Panc1 (cell line): ENCODE measurements at regions of chrX and their contacts with region 1.

Region 1: GRCh38 chrX:118603981-118604380 is 108.4 kb downstream of the DOCK11 start:
- DNase-seq: peak; percentile 59
- ATAC-seq: peak; percentile 85
- H3K4me3 ChIP-seq: peak overlapping the region in 1 of 2 experiments; percentile 12; a peak in 2 of 4 replicates
- H3K27ac ChIP-seq: no peak overlapping the region
- H3K4me1 ChIP-seq: peaks cover 3% of the 10 kb centered on the region; the same call in 1 of the 2 replicates
- H3K27me3 ChIP-seq: no peaks in the 10 kb centered on the region; the same call in 1 of the 2 replicates
- CTCF ChIP-seq: peak; percentile 88

Region 2: DNA sequence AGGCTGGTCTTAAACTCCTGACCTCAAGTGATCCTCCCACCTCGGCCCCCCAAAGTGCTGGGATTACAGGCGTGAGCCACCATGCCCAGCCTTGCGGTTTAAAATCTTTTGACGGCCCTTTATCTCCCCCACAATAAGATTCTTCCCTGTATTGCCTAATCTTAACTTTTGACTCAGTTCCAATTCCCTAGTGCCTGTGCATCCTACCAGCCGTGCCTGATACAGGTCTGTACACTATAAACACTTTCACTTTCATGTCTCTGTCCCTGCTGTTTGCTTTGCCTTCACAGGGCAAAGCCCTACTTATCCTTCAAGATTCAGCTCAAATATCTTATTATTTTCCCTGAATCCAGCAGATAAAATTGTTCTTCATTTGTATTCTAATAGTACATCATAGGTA is 183.5 kb before region 1 on chrX:
- CTCF ChIA-PET with region 1: no interaction called
- POLR2A ChIA-PET with region 1: interaction called, 12 read pairs
- in situ Hi-C with region 1: no loop called
- intact Hi-C with region 1: no loop called
- DNase-seq: no peak
- ATAC-seq: no peak
- H3K4me3 ChIP-seq: no peak overlapping the region
- H3K27ac ChIP-seq: no peak overlapping the region
- H3K4me1 ChIP-seq: no peaks in the 10 kb centered on the region
- H3K27me3 ChIP-seq: no peaks in the 10 kb centered on the region
- CTCF ChIP-seq: no peak

Region 3: DNA sequence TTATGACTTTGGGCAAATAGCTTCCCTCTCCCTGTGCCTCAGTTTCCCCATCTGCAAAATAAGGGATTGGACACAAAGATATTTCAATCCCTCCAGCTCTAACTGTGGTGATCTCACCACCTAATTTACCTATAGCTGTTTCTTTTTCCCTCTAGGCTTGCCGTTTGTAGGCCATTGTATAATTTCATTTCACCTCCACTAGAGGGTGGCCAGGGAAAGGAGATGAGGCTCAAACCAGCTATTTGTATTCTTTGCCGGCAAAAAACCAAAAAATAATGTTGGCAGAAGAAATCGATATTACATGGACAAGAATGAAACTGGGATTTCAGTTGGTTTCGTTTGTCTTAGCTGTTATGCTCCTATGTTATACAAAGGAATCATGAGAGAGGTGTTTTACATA is 144.5 kb before region 1 on chrX:
- CTCF ChIA-PET with region 1: interaction called, 36 read pairs
- POLR2A ChIA-PET with region 1: interaction called, 6 read pairs
- in situ Hi-C with region 1: no loop called
- intact Hi-C with region 1: loop called (anchors 2 kb)
- DNase-seq: peak; percentile 12
- ATAC-seq: peak; percentile 83
- H3K4me3 ChIP-seq: no peak overlapping the region
- H3K27ac ChIP-seq: no peak overlapping the region
- H3K4me1 ChIP-seq: no peaks in the 10 kb centered on the region
- H3K27me3 ChIP-seq: no peaks in the 10 kb centered on the region
- CTCF ChIP-seq: peak; percentile 73; the same call in 1 of the 2 replicates

Region 4: GRCh38 chrX:118627084-118627758 is 23.2 kb after region 1 on chrX:
- CTCF ChIA-PET with region 1: interaction called, 10 read pairs
- POLR2A ChIA-PET with region 1: no interaction called
- in situ Hi-C with region 1: no loop called
- intact Hi-C with region 1: no loop called
- DNase-seq: no peak
- ATAC-seq: peak; percentile 78
- H3K4me3 ChIP-seq: no peak overlapping the region
- H3K27ac ChIP-seq: no peak overlapping the region
- H3K4me1 ChIP-seq: no peaks in the 10 kb centered on the region
- H3K27me3 ChIP-seq: peaks cover 2% of the 10 kb centered on the region; the same call in 1 of the 2 replicates
- CTCF ChIP-seq: peak; percentile 73; the same call in 1 of the 2 replicates

Region 5: GRCh38 chrX:118807151-118808017 is 203.4 kb after region 1 on chrX:
- CTCF ChIA-PET with region 1: interaction called, 3 read pairs
- POLR2A ChIA-PET with region 1: no interaction called
- in situ Hi-C with region 1: no loop called
- intact Hi-C with region 1: loop called (anchors 1 kb)
- DNase-seq: peak; percentile 24
- ATAC-seq: peak; percentile 90
- H3K4me3 ChIP-seq: no peak overlapping the region
- H3K27ac ChIP-seq: no peak overlapping the region
- H3K4me1 ChIP-seq: no peaks in the 10 kb centered on the region
- H3K27me3 ChIP-seq: no peaks in the 10 kb centered on the region
- CTCF ChIP-seq: peak; percentile 79

Region 6: DNA sequence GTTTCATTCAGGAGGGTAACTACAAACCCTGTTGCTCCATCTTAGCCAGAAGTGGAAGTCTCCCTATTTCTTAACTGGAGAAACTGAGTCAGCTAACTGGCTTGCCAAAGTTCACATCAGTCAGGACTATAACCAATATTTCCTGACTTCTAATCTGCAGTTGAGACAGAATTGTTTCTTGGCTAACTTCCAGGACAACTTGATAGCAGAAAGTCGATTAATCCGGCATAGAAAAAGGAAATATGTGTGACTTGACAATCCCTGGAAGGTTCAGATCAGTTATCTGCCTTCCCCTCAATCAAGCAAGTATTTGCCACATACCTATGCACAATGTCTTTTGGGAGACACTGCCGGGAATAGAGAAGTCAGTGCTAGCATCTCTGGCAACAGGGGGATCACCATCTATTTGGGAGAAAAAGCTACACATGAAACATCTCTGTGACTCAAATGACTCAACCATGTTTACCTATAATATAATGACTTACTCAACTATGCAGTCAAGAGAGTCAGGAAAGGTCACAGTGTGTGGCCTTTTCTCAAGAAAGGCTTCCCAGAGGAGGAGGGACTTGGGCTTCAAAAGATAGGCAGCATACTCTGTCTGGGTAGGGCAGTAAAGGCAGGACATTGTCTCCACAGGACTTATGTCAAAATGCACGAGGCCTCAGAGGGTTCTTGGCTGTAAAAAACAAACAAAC is 358.0 kb after region 1 on chrX:
- CTCF ChIA-PET with region 1: no interaction called
- POLR2A ChIA-PET with region 1: no interaction called
- in situ Hi-C with region 1: no loop called
- intact Hi-C with region 1: no loop called
- DNase-seq: no peak
- ATAC-seq: no peak
- H3K4me3 ChIP-seq: no peak overlapping the region
- H3K27ac ChIP-seq: no peak overlapping the region
- H3K4me1 ChIP-seq: no peaks in the 10 kb centered on the region
- H3K27me3 ChIP-seq: no peaks in the 10 kb centered on the region
- CTCF ChIP-seq: no peak